Uterus (tissue), 4 donors: ENCODE measurements at regions of chr5 and their contacts with region 1.

Region 1: DNA sequence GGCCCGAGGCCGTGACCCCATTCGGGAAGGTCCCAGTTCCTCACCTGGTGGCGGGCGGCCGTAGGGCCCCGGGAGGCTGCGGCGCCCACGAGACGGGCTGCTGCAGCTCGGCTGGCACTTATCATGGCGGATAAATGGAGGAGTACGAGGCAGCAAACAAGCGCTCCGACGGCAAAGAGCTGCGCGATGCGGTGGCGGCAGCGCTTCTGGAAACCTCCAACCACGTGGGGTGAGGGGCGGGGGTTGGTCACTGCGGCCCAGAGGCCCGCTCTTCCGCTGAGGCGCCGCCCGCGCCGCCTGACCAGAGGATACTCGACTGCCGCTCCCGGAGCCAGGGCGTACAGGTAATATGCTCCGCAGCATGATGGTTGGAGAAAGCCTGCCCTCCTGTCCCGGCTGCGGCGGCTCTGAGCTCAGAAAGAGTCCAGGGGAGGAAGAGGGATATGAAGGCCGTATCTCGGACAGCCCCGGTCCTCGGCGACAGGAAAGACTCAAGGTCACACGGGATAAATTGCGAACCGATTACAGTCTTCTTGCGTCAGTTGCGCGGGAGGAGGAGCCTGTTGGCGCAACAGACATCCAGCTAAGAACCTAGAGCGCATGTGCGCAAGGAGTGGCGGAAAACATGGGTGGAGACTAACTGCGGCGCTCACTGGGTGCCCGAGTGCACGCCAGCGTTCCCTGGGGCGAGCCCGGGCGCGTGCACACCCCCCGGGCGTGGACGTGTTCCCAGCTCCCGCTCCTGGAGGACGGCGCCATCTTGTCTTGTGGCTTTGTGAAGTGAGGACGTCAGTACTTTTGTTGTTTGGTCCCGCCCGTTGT is at the start of gene HSPA9:
- DNase-seq: peak; percentile 98 to 99
- H3K4me3 ChIP-seq: peak within 1 kb of the TSS; percentile 79 to 96
- H3K27ac ChIP-seq: peak within 1 kb of the TSS; percentile 93 to 98
- H3K4me1 ChIP-seq: peaks cover 0 to 10% of the 10 kb centered on the region in 2 donors
- H3K27me3 ChIP-seq: no peaks in the 10 kb centered on the region
- CTCF ChIP-seq: peak in 2 of 4 experiments; percentile 3 to 33
- POLR2A ChIP-seq: peak; percentile 80 to 82
- total RNA-seq, gene HSPA9: 128 to 254 (median 154) TPM

Region 2: GRCh38 chr5:138752951-138753793 is 177.8 kb after region 1 on chr5 and contains the start of gene CTNNA1:
- intact Hi-C with region 1: loop called (anchors 5 kb)
- DNase-seq: peak; percentile 82 to 83
- H3K4me3 ChIP-seq: peak within 1 kb of the TSS; percentile 87 to 94
- H3K27ac ChIP-seq: peak within 1 kb of the TSS; percentile 98 to 99
- H3K4me1 ChIP-seq: peaks cover 5 to 14% of the 10 kb centered on the region in 2 donors
- H3K27me3 ChIP-seq: no peaks in the 10 kb centered on the region
- CTCF ChIP-seq: peak in 1 of 4 experiments; percentile 17
- POLR2A ChIP-seq: peak; percentile 62 to 74
- total RNA-seq, gene CTNNA1: 140 to 752 (median 389) TPM

Region 3: GRCh38 chr5:139611703-139612584 is 1036.5 kb after region 1 on chr5:
- intact Hi-C with region 1: no loop called
- DNase-seq: no peak
- H3K4me3 ChIP-seq: no peak overlapping the region
- H3K27ac ChIP-seq: no peak overlapping the region
- H3K4me1 ChIP-seq: no peaks in the 10 kb centered on the region
- H3K27me3 ChIP-seq: no peaks in the 10 kb centered on the region
- CTCF ChIP-seq: no peak
- POLR2A ChIP-seq: no peak